ENCODE measurements at regions of chr14 and their contacts with region 1.

Region 1: GRCh38 chr14:102209217-102209966 is 69.7 kb downstream of the WDR20 start:
- DNase-seq: peak in 8 of 10 donors; percentile 57 to 96 (median 74)

Region 2: GRCh38 chr14:102086972-102087761 is 122.2 kb before region 1 on chr14 and contains the start of gene HSP90AA1:
- intact Hi-C with region 1: loop called (anchors 2 kb)
- DNase-seq: peak; percentile 83 to 98 (median 91)

Region 3: GRCh38 chr14:102154821-102155549 is 54.4 kb before region 1 on chr14:
- intact Hi-C with region 1: no loop called
- DNase-seq: no peak

Region 4: DNA sequence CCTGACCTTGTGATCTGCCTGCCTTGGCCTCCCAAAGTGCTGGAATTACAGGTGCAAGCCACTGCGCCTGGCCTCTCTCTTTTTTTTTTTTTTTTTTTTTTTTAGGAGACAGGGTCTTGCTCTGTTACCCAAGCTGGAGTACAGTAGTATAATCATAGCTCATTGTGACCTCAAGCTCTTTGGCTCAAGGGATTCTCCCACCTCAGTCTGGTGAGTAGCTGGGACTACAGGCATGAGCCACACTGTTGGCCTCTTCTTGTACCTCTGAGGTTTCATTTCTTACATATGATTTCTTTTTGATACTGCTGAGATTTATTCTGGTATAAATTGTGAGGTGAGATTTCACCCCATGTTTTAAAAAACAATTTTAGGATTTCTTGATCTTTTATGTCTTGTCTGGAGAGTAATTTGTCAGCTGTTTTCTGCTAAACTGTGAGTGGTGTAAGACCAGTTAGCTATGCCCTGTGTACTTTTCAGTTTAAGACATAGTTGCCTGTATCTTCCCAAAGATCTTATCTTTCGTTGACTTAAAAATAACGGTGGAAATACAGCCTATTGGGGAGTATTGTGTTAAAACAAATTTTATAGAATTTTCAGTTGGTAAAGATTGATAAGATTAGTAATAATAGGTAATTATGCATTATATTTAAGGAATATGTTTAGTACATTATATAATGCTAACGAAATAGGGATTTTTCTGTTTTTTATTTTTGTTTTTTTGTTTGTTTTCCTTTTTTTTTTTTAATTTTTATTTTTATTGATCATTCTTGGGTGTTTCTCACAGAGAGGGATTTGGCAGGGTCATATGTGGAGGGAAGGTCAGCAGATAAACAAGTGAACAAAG is 38.0 kb before region 1 on chr14:
- intact Hi-C with region 1: no loop called
- DNase-seq: no peak

Measured in posterior cingulate gyrus (tissue), 11 donors.